Dorsolateral prefrontal cortex (tissue), 120 donors: ENCODE measurements at regions of chr6 and their contacts with region 1.

Region 1: GRCh38 chr6:163398815-163399214 is 15.7 kb upstream of the QKI start:
- DNase-seq: peak in 6 of 10 donors; percentile 38 to 58 (median 52)
- H3K4me3 ChIP-seq: peak overlapping the region in 2 of 59 donors; percentile 0 to 6
- H3K27ac ChIP-seq: peak overlapping the region in 58 of 59 donors; percentile 18 to 91 (median 78)
- H3K27me3 ChIP-seq: no peaks in the 10 kb centered on the region
- CTCF ChIP-seq: no peak

Region 2: DNA sequence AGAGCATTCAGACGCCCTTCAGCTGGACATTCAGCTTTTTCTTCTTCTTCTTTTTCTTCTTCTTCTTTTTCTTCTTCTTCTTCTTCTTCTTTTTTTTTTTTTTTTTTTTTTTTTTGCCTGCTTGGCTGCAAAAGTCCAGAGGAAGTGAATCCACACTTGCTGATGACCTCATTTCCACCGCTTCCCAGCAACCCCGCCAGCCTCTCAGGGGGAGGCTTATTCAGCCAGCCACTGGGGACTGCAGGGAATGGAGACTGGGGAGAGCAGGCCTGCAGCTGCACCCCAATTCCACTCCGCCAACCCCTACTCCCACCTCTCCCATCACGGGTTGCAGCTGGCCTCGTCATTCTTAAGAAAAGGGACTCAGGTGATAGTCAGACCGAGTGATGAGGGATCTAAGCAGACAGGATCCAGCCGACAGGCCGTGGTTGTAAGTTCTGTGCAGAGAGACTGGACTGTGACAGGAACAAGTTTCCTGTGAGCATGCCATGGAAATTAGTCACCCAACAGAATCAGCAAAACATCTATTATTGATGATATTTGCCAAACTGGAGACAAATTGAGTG is 43.3 kb before region 1 on chr6:
- intact Hi-C with region 1: loop called in 1 of 2 experiments (anchors 5 kb)
- DNase-seq: peak in 7 of 10 donors; percentile 65 to 81 (median 74)
- H3K4me3 ChIP-seq: peak overlapping the region in 41 of 59 donors; percentile 1 to 48 (median 26)
- H3K27ac ChIP-seq: peak overlapping the region; percentile 51 to 100 (median 97)
- H3K27me3 ChIP-seq: no peaks in the 10 kb centered on the region
- CTCF ChIP-seq: peak in 2 of 56 donors; percentile 10 to 14